GM10248 (cell line): ENCODE measurements at regions of chr4 and their contacts with region 1.

Region 1: DNA sequence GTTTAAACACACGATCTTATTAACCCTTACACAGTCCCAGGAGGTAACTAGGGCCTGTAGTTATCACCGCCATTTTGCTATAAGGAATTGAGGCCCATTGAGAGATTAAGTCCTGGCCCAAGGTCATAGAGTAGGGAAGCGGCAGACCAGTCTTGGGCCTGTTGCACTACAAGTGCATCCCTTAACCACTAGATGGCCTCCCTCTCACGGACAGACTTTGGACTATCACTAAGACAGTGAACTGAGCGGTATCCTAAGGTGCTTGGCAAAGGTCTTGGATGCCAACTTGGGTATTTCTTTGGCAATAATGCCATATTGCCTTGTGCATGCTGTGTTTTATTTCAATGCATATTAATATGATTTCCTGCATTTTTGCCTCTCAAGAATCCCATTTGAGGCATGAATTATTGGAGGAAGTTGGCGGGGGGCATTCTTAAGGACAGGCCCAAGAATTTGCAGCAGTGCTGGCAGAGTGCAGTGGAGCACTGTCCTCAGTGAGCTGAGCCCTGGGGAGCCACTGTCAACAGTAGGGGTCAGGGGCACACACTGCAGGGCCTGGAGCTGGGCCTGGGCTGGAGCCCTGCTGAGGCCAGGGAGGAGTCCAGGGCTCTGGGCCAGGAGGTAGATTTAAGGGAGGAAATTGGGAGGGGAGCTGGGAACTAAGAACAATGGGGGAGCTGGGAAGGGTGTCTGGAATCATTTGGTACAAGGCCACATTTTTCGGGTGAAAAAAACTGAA is 147.4 kb downstream of the SMIM20 start:
- DNase-seq: peak; percentile 63
- CTCF ChIP-seq: peak; percentile 62

Region 2: DNA sequence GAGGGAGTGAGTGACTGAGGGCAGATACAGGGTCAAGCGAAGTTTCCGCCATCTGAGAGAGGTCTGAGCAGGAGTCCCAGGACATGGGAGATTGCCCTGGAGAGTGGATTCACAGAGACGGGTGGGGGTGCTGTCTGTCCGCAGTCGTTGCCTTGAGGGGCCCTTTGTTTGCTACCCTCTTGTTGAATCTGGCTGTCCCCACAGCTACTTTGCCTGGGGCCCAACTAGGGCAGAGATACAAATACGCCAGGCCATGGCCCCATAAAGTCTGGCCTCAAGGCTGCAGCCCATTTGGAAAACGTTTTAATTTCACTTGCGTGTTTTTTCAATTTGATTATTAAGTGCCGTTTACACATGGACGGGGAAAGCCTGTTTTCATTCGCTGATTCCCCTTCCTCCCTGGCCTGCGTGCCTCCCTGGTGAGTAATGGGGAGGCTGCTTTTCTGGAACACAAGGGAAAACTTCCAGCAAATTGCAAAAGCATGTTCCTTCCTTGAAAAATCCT is 13.0 kb before region 1 on chr4:
- CTCF ChIA-PET with region 1: interaction called, 16 read pairs
- POLR2A ChIA-PET with region 1: interaction called, 4 read pairs
- DNase-seq: no peak
- CTCF ChIP-seq: no peak